SK-N-SH (cell line): ENCODE measurements at regions of chr6 and their contacts with region 1.

Region 1: DNA sequence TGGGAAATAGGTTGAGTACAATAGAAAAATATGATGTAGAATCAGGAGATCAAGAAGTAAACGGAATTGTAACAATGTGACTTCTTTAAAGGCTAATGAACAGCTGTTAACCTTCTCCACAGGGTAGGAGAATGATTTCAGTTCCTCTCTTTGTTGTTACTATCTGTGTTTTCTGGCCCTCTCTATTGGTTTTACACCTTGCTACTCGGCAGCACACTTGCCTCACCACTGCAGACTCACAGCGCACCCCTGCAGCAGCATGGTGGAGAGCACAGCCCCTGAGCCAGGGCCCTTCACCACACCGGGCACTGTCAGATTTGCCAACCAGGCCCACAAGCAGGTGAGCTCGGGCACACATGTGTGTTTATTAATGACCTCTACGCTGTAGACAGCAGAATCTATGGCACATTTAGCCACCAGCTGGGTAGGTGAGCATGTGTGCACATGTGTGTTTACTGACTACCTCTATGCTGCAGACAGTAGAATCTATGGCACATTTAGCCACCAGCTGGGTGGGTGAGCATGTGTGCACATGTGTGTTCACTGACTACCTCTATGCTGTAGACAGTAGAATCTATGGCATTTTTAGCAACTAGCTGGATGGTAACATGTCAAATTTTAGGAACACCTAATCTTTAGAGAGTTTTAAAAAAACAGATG is 16.8 kb downstream of the SFT2D1 start:
- DNase-seq: no peak
- H3K4me3 ChIP-seq: no peak overlapping the region
- H3K27ac ChIP-seq: no peak overlapping the region
- H3K4me1 ChIP-seq: peaks cover 0 to 4% of the 10 kb centered on the region in 2 experiments; a peak in 2 of 4 replicates
- H3K27me3 ChIP-seq: no peaks in the 10 kb centered on the region
- CTCF ChIP-seq: no peak
- EP300 ChIP-seq: no peak
- RAD21 ChIP-seq: no peak

Region 2: DNA sequence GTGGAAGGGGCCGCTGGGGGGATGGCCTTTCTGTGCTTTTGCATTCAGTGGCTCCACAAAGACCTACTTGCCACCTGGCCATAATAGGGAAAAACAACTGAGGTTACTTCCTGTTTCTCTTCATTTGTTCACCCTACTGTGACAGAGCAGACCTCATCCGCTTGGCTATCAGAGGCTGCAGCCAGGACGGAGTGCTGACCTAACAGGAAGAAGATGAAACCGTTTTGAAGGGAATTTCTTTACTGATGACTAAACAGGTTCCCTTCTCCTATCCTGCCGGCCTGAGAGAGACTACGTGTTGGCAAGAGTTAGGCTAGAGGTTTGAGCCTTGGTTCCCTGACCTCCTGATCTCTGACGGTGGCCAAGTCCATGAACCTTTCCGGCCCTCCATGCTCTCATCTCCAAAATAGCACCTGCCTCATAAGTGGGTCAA is 38.7 kb before region 1 on chr6:
- CTCF ChIA-PET with region 1: no interaction called
- POLR2A ChIA-PET with region 1: no interaction called
- DNase-seq: no peak
- H3K4me3 ChIP-seq: no peak overlapping the region
- H3K27ac ChIP-seq: no peak overlapping the region
- H3K4me1 ChIP-seq: no peaks in the 10 kb centered on the region
- H3K27me3 ChIP-seq: peaks cover 38% of the 10 kb centered on the region; the same call in 1 of the 2 replicates
- CTCF ChIP-seq: no peak
- EP300 ChIP-seq: no peak
- RAD21 ChIP-seq: no peak

Region 3: DNA sequence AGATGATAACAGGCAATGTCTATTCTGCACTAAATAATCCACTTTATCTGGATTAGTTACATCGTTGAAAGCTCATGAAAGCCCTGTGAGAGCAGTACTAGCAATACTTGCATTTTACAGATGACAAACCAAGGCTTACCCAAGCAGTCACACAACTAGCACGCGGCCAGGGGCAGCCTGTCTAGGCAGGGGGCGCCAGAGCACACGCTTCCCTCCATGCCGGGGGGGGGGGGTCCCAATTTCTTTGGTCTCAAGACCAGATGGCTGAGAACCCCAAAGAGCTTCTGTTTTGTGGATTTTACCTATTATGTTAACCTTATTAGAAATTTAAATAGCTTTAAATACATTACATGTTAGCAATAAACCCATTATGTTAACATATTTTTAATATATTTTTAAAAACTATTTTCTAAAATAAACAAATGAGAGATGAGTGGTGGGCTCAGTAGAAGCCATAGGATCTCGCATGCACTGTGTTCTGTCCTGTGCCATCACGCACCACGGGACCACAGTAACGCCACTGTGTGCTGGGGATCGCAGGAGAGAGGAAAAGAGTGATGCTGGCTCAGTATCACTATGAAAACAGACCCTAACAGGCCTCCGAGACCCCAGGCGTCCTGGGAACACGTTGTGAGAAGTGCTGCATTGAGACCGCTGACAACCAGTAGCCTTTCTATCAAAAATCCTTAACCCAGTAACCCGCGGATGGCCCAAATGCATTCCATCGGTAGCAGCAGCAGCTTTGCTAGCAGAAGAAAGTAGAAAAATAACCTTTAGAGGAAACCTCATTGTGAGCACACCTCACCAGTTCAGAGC is 12.1 kb before region 1 on chr6:
- CTCF ChIA-PET with region 1: interaction called, 17 read pairs
- POLR2A ChIA-PET with region 1: no interaction called
- DNase-seq: peak; percentile 74
- H3K4me3 ChIP-seq: no peak overlapping the region; a peak in 1 of 4 replicates
- H3K27ac ChIP-seq: no peak overlapping the region
- H3K4me1 ChIP-seq: peaks cover 0 to 3% of the 10 kb centered on the region in 2 experiments; a peak in 1 of 4 replicates
- H3K27me3 ChIP-seq: peaks cover 10% of the 10 kb centered on the region
- CTCF ChIP-seq: peak; percentile 56
- EP300 ChIP-seq: no peak
- RAD21 ChIP-seq: peak; percentile 58